ENCODE measurements at regions of chr2 and their contacts with region 1.

Region 1: DNA sequence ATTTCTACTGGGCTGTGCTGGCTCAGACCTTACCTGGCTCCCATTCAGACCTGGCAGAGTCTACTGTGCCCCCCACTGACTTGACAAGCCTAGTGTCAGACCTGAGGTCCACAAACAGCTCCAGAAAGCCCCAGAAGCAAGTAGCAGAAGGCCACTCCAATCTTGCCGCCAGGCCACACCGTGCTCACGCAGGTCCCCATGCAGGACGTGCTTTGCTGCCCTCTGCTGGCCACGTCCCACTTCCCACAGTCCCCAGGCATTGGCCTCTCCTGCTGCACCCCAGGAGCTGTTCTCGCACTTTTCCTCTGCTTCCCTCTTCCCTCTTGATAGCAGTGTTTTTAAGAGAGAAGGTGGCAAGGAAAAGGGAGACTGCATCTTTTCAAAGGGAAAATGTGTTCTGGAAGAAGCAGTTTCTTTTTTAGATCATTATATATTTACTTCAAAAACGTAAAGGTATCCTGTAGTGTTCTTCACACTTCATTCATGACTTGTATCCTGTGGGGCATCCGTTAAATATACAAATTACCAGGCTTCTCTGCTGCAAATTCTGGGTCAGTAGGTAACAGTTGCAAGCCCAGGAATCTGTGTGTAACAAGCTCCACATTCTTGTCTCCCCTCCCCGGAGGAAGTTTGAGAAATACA is 81.4 kb upstream of the PAPOLG start:
- DNase-seq: peak; percentile 73 to 87 (median 80)
- ATAC-seq: peak; percentile 100
- H3K4me3 ChIP-seq: no peak overlapping the region
- H3K27ac ChIP-seq: no peak overlapping the region
- H3K4me1 ChIP-seq: no peaks in the 10 kb centered on the region; a peak in 2 of 5 replicates
- H3K27me3 ChIP-seq: peaks cover 19 to 42% of the 10 kb centered on the region in 2 experiments; a peak in 4 of 5 replicates
- CTCF ChIP-seq: peak; percentile 88 to 96 (median 94)
- EP300 ChIP-seq: no peak
- POLR2A ChIP-seq: no peak
- RAD21 ChIP-seq: peak; percentile 41 to 77

Region 2: GRCh38 chr2:60560734-60561644 is 113.7 kb before region 1 on chr2:
- CTCF ChIA-PET with region 1: no interaction called
- POLR2A ChIA-PET with region 1: no interaction called
- in situ Hi-C with region 1: no loop called
- intact Hi-C with region 1: loop called (anchors 2 kb)
- DNase-seq: peak; percentile 45 to 58 (median 56)
- ATAC-seq: peak; percentile 91
- H3K4me3 ChIP-seq: no peak overlapping the region
- H3K27ac ChIP-seq: no peak overlapping the region
- H3K4me1 ChIP-seq: no peaks in the 10 kb centered on the region
- H3K27me3 ChIP-seq: peaks cover 7 to 8% of the 10 kb centered on the region in 2 experiments; a peak in 4 of 5 replicates
- CTCF ChIP-seq: peak; percentile 52 to 68 (median 62)
- EP300 ChIP-seq: no peak
- POLR2A ChIP-seq: no peak
- RAD21 ChIP-seq: peak in 1 of 2 experiments; percentile 43; a peak in 2 of 4 replicates